OCI-LY7 (cell line): ENCODE measurements at regions of chr12 and their contacts with region 1.

Region 1: GRCh38 chr12:58787021-58787760 is 133.1 kb downstream of the LRIG3 start:
- DNase-seq: no peak
- H3K4me3 ChIP-seq: no peak overlapping the region
- H3K27ac ChIP-seq: no peak overlapping the region
- H3K4me1 ChIP-seq: no peaks in the 10 kb centered on the region
- CTCF ChIP-seq: no peak

Region 2: GRCh38 chr12:58774731-58775130 is 12.5 kb before region 1 on chr12:
- CTCF ChIA-PET with region 1: no interaction called
- POLR2A ChIA-PET with region 1: no interaction called
- intact Hi-C with region 1: loop called (anchors 2 kb)
- DNase-seq: no peak
- H3K4me3 ChIP-seq: no peak overlapping the region
- H3K27ac ChIP-seq: no peak overlapping the region
- H3K4me1 ChIP-seq: no peaks in the 10 kb centered on the region
- CTCF ChIP-seq: no peak

Region 3: GRCh38 chr12:58877242-58877743 is 90.1 kb after region 1 on chr12:
- CTCF ChIA-PET with region 1: no interaction called
- POLR2A ChIA-PET with region 1: no interaction called
- intact Hi-C with region 1: no loop called
- DNase-seq: no peak
- H3K4me3 ChIP-seq: no peak overlapping the region
- H3K27ac ChIP-seq: no peak overlapping the region
- H3K4me1 ChIP-seq: no peaks in the 10 kb centered on the region
- CTCF ChIP-seq: no peak